Activated CD4-positive, alpha-beta T cell treated with anti-CD3 and anti-CD28 coated beads for 36 hours (primary cell): ENCODE measurements at regions of chr7 and their contacts with region 1.

Region 1: DNA sequence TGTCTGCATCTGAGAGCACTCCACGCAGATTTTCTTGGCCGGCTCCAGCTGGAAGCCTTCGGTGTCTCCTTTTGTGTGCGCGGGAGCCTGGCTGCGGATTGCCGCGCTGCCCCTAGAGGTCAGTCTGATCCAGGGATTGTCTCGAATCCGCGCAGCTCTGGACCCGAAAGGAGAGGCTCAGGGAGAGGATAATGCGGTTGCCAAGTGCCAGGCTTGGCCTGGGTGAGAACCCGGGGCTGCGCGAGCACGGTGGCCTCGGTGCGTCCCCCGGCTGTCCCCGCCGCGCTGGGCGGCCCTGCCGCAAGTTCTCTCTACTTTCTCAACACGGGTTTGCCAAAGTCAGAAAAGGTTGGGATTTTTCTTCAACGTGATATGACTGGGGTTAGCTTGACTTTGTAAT is 140.9 kb downstream of the ADCYAP1R1 start:
- DNase-seq: peak; percentile 49
- ATAC-seq: no peak
- H3K4me3 Mint-ChIP-seq: no peak overlapping the region
- H3K27ac Mint-ChIP-seq: no peak overlapping the region
- H3K4me1 Mint-ChIP-seq: no peaks in the 10 kb centered on the region
- H3K27me3 Mint-ChIP-seq: peaks cover 21% of the 10 kb centered on the region

Region 2: DNA sequence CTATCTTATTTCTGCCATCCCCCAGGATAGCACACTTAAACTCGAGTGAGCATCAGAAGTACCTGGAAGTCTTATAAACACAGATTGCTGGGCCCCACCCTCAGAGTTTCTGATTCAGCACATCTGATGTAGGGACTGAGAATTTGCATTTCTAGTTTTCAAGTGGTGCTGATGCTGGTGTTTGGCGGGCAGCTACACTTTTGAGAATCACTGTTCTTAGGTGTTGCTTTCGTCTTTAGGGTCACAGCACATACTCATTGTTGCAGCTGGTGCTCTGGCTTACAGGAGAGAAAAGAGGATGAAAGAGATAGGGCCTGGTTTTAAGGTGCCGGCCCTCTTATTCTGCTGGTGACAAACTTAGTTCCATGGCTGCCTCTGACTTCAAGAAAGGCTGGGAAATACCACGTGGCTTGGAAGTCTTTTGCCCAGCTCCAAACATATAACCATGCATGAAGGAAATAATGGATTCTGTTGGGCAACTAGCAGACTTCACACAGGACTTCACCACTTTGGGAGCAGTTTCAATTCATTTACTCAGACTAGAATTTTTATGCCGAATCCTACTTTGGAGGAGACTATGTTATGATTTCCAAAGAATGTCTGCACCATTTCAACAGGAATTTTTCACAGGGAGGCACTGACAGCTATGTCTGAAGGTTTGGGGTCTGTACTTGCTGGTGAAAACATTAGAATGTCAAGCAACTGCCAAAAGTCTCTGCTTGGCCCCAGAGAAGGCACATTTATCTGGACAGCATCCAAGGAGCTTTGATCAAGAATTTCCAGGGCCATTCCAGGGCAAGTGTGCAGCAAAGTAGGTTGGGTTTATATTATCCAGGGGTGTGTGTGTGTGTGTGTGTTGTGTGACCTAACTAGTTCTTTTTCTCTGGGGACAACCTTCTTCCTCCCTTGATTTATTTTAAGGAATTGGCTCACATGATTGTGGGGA is 428.7 kb before region 1 on chr7:
- CTCF ChIA-PET with region 1: no interaction called
- POLR2A ChIA-PET with region 1: no interaction called
- intact Hi-C with region 1: no loop called
- DNase-seq: no peak
- ATAC-seq: no peak
- H3K4me3 Mint-ChIP-seq: no peak overlapping the region
- H3K27ac Mint-ChIP-seq: no peak overlapping the region
- H3K4me1 Mint-ChIP-seq: no peaks in the 10 kb centered on the region
- H3K27me3 Mint-ChIP-seq: peaks cover 1% of the 10 kb centered on the region

Region 3: GRCh38 chr7:31204071-31204470 is 11.1 kb after region 1 on chr7:
- CTCF ChIA-PET with region 1: no interaction called
- POLR2A ChIA-PET with region 1: no interaction called
- intact Hi-C with region 1: no loop called
- DNase-seq: no peak
- ATAC-seq: no peak
- H3K4me3 Mint-ChIP-seq: no peak overlapping the region
- H3K27ac Mint-ChIP-seq: no peak overlapping the region
- H3K4me1 Mint-ChIP-seq: no peaks in the 10 kb centered on the region
- H3K27me3 Mint-ChIP-seq: peaks cover 4% of the 10 kb centered on the region

Region 4: GRCh38 chr7:31540721-31541120 is 347.7 kb after region 1 on chr7:
- CTCF ChIA-PET with region 1: no interaction called
- POLR2A ChIA-PET with region 1: no interaction called
- intact Hi-C with region 1: no loop called
- DNase-seq: no peak
- ATAC-seq: no peak
- H3K4me3 Mint-ChIP-seq: no peak overlapping the region
- H3K27ac Mint-ChIP-seq: no peak overlapping the region
- H3K4me1 Mint-ChIP-seq: no peaks in the 10 kb centered on the region
- H3K27me3 Mint-ChIP-seq: peaks cover 2% of the 10 kb centered on the region

Region 5: GRCh38 chr7:31735991-31736982 is 543.3 kb after region 1 on chr7:
- CTCF ChIA-PET with region 1: no interaction called
- POLR2A ChIA-PET with region 1: no interaction called
- intact Hi-C with region 1: loop called in 1 of 2 experiments (anchors 5 kb)
- DNase-seq: peak; percentile 27
- ATAC-seq: no peak
- H3K4me3 Mint-ChIP-seq: no peak overlapping the region
- H3K27ac Mint-ChIP-seq: no peak overlapping the region
- H3K4me1 Mint-ChIP-seq: no peaks in the 10 kb centered on the region
- H3K27me3 Mint-ChIP-seq: peaks cover 3% of the 10 kb centered on the region